ENCODE measurements at regions of chr15 and their contacts with region 1.

Region 1: DNA sequence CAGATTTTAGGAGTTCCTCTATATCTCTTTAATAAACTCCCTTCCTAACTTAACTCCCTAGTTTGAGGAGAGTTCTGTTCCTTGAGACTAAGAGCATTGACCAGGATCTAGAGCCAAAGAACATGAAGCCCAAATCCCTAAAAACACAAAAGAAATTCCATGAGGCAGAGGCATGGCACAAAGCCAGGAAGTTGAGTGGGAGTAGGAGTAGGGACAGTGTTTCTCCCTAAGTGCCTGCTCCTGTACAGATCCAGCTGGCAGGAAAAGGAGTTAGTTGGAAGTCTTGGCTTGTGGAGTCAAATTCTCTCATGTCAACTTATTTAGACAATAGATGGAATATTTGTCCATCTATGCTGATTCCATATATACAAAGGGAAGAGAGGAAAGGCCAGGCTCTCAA is 11.4 kb downstream of the ACTC1 start:
- DNase-seq: no peak
- ATAC-seq: no peak
- H3K4me3 ChIP-seq: no peak overlapping the region
- H3K27ac ChIP-seq: no peak overlapping the region
- H3K4me1 ChIP-seq: no peaks in the 10 kb centered on the region
- H3K27me3 ChIP-seq: peaks cover 29% of the 10 kb centered on the region
- CTCF ChIP-seq: no peak
- POLR2A ChIP-seq: no peak
- RAD21 ChIP-seq: no peak

Region 2: GRCh38 chr15:34665498-34666116 is 118.4 kb before region 1 on chr15:
- CTCF ChIA-PET with region 1: no interaction called
- POLR2A ChIA-PET with region 1: no interaction called
- RAD21 ChIA-PET with region 1: no interaction called
- intact Hi-C with region 1: no loop called
- DNase-seq: no peak
- ATAC-seq: no peak
- H3K4me3 ChIP-seq: no peak overlapping the region
- H3K27ac ChIP-seq: no peak overlapping the region
- H3K4me1 ChIP-seq: no peaks in the 10 kb centered on the region
- H3K27me3 ChIP-seq: peaks cover 63% of the 10 kb centered on the region
- CTCF ChIP-seq: no peak
- POLR2A ChIP-seq: no peak
- RAD21 ChIP-seq: no peak

Region 3: GRCh38 chr15:34802803-34803395 is 18.9 kb after region 1 on chr15:
- CTCF ChIA-PET with region 1: no interaction called
- POLR2A ChIA-PET with region 1: no interaction called
- RAD21 ChIA-PET with region 1: no interaction called
- intact Hi-C with region 1: loop called (anchors 2 kb)
- DNase-seq: no peak
- ATAC-seq: no peak
- H3K4me3 ChIP-seq: no peak overlapping the region
- H3K27ac ChIP-seq: no peak overlapping the region
- H3K4me1 ChIP-seq: no peaks in the 10 kb centered on the region
- H3K27me3 ChIP-seq: no peaks in the 10 kb centered on the region; the same call in none of the 2 replicates
- CTCF ChIP-seq: no peak
- POLR2A ChIP-seq: no peak
- RAD21 ChIP-seq: no peak

Region 4: DNA sequence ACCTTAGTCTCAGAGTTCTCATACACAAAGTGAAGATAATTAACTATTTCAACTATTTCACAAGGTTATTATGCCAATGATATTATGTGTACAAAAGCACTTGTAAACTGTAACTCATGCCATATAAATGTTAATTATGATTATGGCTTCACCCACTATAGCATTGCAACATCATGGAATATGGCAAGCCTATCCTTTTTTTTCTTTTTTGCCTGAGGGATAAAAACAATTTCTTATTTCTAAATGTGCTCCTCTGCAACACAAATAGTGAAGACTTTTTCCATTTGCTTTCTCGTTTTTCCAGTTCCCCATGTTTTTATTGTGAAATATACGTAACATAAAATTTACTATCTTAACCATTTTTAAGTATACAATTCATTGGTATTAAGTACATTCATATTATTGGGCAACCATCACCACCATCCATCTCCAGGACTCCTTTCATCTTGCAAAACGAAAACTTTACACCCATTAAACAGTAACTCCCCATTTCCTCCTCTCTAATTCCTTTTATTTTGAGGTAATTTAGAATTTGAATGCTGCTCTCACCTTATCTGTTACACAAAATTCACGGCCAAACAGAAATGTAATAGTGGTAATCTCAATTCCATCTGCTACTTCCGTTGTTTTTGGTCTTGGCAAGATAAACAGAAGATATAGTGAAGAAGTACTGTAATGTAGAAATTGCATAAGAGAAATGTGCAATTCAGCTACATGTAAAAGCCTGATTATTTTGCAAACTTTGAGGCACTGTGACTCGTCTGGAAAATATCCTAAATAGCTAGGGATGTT is 254.9 kb after region 1 on chr15:
- CTCF ChIA-PET with region 1: no interaction called
- POLR2A ChIA-PET with region 1: no interaction called
- RAD21 ChIA-PET with region 1: no interaction called
- intact Hi-C with region 1: no loop called
- DNase-seq: no peak
- ATAC-seq: no peak
- H3K4me3 ChIP-seq: no peak overlapping the region
- H3K27ac ChIP-seq: no peak overlapping the region
- H3K4me1 ChIP-seq: peaks cover 0 to 4% of the 10 kb centered on the region in 2 experiments; a peak in 1 of 4 replicates
- H3K27me3 ChIP-seq: no peaks in the 10 kb centered on the region
- CTCF ChIP-seq: no peak
- POLR2A ChIP-seq: no peak
- RAD21 ChIP-seq: no peak

Measured in HCT116 (cell line).